Spleen (tissue), 13 donors: ENCODE measurements at regions of chr2 and their contacts with region 1.

Region 1: GRCh38 chr2:120699292-120699691 is 36.4 kb upstream of the GLI2 start:
- DNase-seq: no peak
- H3K4me3 ChIP-seq: no peak overlapping the region
- H3K27ac ChIP-seq: no peak overlapping the region
- H3K4me1 ChIP-seq: peaks cover 0 to 20% (median 12%) of the 10 kb centered on the region in 6 donors
- H3K27me3 ChIP-seq: peaks cover 0 to 39% (median 23%) of the 10 kb centered on the region in 7 donors
- CTCF ChIP-seq: no peak
- POLR2A ChIP-seq: no peak

Region 2: DNA sequence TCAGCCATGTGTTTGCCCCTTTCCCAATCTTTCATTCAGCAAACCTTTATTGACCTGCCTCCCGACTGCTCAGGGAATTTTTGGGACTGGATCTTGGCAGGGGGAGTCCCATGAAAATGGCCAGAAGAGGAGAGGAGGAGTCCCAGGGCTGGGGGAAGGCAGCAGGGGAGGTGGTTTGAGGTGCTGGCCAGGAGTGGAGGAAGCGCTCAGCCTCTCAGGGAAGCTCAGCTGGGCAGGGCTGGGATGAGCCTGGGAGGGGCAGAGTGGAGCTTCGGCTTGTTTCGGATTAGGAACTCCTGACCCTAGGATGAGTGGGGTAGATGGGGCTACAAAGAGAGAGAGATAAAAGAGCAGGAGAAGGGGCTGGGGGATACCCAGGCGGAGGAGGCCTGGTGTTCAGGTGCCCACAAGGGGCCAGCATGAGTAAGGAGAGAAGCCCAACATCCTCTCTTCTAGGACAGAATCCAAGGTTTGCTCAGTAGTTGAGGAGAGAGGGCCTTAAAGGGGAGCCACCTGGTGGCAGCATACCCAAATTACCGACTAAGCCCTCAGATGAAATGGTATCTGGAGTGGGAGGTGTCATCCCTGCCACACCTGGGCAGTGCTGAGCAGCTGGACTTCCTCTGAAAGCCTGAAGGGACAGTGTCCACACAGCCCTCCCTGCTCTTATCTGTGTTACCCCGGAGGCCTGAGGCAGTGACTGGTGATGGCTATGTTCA is 262.2 kb before region 1 on chr2:
- intact Hi-C with region 1: no loop called
- DNase-seq: peak; percentile 29
- H3K4me3 ChIP-seq: no peak overlapping the region
- H3K27ac ChIP-seq: no peak overlapping the region
- H3K4me1 ChIP-seq: peaks cover 0 to 4% (median 2%) of the 10 kb centered on the region in 6 donors
- H3K27me3 ChIP-seq: peaks cover 0 to 64% (median 16%) of the 10 kb centered on the region in 7 donors
- CTCF ChIP-seq: peak in 4 of 11 experiments; percentile 14 to 41 (median 26)
- POLR2A ChIP-seq: no peak

Region 3: GRCh38 chr2:121071034-121071504 is 371.8 kb after region 1 on chr2:
- intact Hi-C with region 1: loop called (anchors 5 kb)
- DNase-seq: no peak
- H3K4me3 ChIP-seq: no peak overlapping the region
- H3K27ac ChIP-seq: no peak overlapping the region
- H3K4me1 ChIP-seq: peaks cover 0 to 14% (median 4%) of the 10 kb centered on the region in 6 donors
- H3K27me3 ChIP-seq: peaks cover 0 to 66% (median 22%) of the 10 kb centered on the region in 7 donors
- CTCF ChIP-seq: peak; percentile 8 to 90 (median 72)
- POLR2A ChIP-seq: no peak